Prostate gland (tissue), 2 donors: ENCODE measurements at regions of chr15 and their contacts with region 1.

Region 1: GRCh38 chr15:91302588-91303439 is 202.8 kb downstream of the SV2B start:
- DNase-seq: peak; percentile 8
- H3K4me3 ChIP-seq: no peak overlapping the region
- H3K27ac ChIP-seq: no peak overlapping the region
- H3K4me1 ChIP-seq: no peaks in the 10 kb centered on the region
- H3K27me3 ChIP-seq: peaks cover 2% of the 10 kb centered on the region
- CTCF ChIP-seq: peak; percentile 53 to 68 (median 67)
- POLR2A ChIP-seq: no peak

Region 2: GRCh38 chr15:91852741-91853510 is 550.1 kb after region 1 on chr15:
- intact Hi-C with region 1: loop called (anchors 2 kb)
- DNase-seq: peak; percentile 57
- H3K4me3 ChIP-seq: peak overlapping the region; percentile 49 to 60
- H3K27ac ChIP-seq: peak overlapping the region; percentile 83
- H3K4me1 ChIP-seq: no peaks in the 10 kb centered on the region
- H3K27me3 ChIP-seq: no peaks in the 10 kb centered on the region
- CTCF ChIP-seq: peak; percentile 67 to 88 (median 80)
- POLR2A ChIP-seq: no peak

Region 3: DNA sequence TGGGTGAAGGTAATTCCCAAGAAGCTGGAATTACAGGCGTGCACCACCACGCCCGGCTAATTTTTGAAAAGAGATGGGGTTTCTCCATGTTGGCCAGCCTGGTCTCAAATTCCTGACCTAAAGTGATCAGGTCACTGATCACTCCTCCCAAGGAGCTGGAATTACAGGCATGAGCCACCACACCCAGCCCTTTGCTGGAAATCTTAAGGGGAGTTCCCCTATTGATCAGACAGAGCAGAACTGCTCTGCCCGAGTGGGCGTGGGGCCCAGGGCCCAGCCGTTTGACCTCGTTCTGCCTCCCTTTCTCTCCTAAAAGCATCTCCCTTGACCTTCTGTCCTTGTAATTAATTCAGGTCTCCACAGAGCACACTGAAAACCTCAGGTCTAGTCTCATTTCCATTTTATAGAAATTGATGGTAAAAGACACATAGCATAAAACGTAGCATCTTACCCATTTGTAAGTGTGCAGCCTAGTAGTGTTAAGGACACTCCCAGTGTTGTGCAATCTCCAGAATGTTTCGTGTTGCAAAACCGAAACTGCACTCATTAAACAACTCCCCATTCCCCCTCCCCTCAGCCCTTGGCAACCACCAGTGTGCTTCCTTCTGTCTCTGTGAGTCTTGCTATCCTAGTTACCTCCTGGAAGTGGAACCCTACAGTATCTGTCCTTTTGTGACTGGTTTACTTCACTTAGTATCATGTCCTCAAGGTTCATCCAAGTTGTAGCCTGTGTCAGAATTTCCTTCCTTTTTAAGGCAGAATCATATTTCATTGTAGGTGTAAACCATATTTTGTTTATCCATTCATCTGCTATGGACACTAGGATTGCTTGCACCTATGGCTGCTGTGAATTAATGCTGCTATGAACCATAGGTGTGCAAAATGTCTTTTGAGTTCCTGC is 640.1 kb after region 1 on chr15:
- intact Hi-C with region 1: loop called (anchors 10 kb)
- DNase-seq: peak; percentile 91
- H3K4me3 ChIP-seq: no peak overlapping the region
- H3K27ac ChIP-seq: peak overlapping the region; percentile 25 to 58
- H3K4me1 ChIP-seq: peaks cover 10% of the 10 kb centered on the region
- H3K27me3 ChIP-seq: no peaks in the 10 kb centered on the region
- CTCF ChIP-seq: no peak
- POLR2A ChIP-seq: no peak